ENCODE measurements at regions of chr7 and their contacts with region 1.

Region 1: DNA sequence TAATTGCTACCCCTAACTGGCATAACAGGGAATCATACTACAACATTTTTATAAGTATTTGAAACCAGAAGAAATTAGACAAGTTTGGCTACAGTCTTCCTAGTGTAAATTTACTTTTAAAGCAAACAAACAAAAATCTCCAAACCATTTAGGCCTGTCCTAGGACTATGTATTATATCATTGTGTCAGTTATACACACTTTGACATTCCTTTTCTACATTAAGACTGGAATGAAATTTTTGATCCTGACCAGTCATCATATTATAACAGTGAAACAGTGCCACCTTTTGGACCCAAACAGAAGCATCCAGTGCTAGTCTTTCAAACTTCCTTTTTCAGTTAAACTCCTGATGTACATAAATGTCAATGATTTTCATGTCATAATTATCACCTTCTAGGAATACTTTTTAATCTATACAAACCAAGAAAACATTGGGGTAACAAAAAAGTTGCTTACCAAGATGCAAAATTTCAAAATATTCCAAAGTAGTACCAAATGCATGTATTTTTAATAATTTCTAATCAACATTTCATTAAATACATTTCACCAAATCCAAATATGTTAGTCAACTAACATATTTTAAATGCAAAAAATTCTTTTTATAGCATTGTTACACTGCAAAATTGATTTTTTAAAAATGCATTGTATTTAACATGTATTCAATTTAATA is 75.7 kb downstream of the IMMP2L start:
- DNase-seq: no peak
- H3K4me3 ChIP-seq: no peak overlapping the region
- H3K27ac ChIP-seq: no peak overlapping the region
- H3K4me1 ChIP-seq: peaks cover 0 to 9% (median 0%) of the 10 kb centered on the region in 4 donors
- H3K27me3 ChIP-seq: no peaks in the 10 kb centered on the region
- CTCF ChIP-seq: peak; percentile 58 to 78 (median 65)
- EP300 ChIP-seq: no peak
- POLR2A ChIP-seq: no peak

Region 2: GRCh38 chr7:111089822-111090426 is 396.7 kb before region 1 on chr7:
- intact Hi-C with region 1: loop called (anchors 2 kb)
- DNase-seq: no peak
- H3K4me3 ChIP-seq: no peak overlapping the region
- H3K27ac ChIP-seq: no peak overlapping the region
- H3K4me1 ChIP-seq: peaks cover 6 to 38% (median 33%) of the 10 kb centered on the region in 4 donors
- H3K27me3 ChIP-seq: no peaks in the 10 kb centered on the region
- CTCF ChIP-seq: peak; percentile 49 to 83 (median 78)
- EP300 ChIP-seq: no peak
- POLR2A ChIP-seq: no peak

Region 3: DNA sequence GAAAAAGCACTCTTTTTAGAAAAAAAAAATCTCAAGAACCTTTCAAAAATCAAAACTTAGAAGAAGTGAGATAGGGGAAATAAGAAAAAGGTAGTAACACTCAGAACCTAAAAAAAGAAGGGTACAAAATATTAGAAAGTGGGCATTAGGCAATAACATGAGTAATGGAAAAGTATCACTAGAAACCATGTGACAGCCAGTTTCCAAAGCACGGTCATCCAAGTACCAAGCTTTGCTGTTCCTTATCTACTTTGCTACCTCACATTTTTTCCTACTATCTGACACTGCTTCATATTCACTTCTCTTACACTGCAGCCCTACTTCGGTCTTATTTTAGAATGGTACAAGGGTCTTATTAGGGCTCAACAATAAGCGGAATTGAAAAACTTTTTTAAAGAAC is 45.4 kb after region 1 on chr7:
- intact Hi-C with region 1: loop called (anchors 2 kb)
- DNase-seq: no peak
- H3K4me3 ChIP-seq: no peak overlapping the region
- H3K27ac ChIP-seq: no peak overlapping the region
- H3K4me1 ChIP-seq: peaks cover 6 to 24% (median 19%) of the 10 kb centered on the region in 4 donors
- H3K27me3 ChIP-seq: no peaks in the 10 kb centered on the region
- CTCF ChIP-seq: no peak
- EP300 ChIP-seq: no peak
- POLR2A ChIP-seq: no peak

Measured in esophagus muscularis mucosa (tissue), 4 donors.